Aorta (tissue), 5 donors: ENCODE measurements at regions of chr2 and their contacts with region 1.

Region 1: GRCh38 chr2:144553379-144553778 is 33.5 kb upstream of the ZEB2 start:
- DNase-seq: no peak
- ATAC-seq: no peak
- H3K4me3 ChIP-seq: no peak overlapping the region
- H3K27ac ChIP-seq: no peak overlapping the region
- H3K4me1 ChIP-seq: no peaks in the 10 kb centered on the region
- H3K27me3 ChIP-seq: no peaks in the 10 kb centered on the region

Region 2: GRCh38 chr2:144402251-144402650 is 151.1 kb before region 1 on chr2:
- intact Hi-C with region 1: no loop called
- DNase-seq: no peak
- ATAC-seq: peak; percentile 36
- H3K4me3 ChIP-seq: no peak overlapping the region
- H3K27ac ChIP-seq: no peak overlapping the region
- H3K4me1 ChIP-seq: no peaks in the 10 kb centered on the region
- H3K27me3 ChIP-seq: no peaks in the 10 kb centered on the region

Region 3: DNA sequence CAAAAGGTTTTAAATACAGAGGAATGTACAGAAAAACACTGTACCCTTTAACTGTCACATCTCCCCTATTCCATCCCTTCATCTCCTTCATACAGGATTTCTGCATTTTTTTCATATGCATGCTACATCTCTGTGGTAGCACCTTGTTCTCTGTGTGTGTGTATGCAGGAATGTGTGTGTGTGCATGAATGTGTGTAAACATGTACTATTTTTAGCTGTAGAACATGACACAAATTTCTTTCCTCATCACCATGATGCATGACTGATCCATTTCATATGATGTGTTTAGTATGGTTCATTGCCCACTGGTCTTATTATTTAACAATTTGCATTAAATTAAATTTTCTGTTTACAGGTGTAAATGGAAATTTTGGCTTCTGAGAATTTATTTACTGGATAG is 12.0 kb before region 1 on chr2:
- intact Hi-C with region 1: loop called in 1 of 2 experiments (anchors 1 kb)
- DNase-seq: no peak
- ATAC-seq: no peak
- H3K4me3 ChIP-seq: no peak overlapping the region
- H3K27ac ChIP-seq: no peak overlapping the region
- H3K4me1 ChIP-seq: no peaks in the 10 kb centered on the region
- H3K27me3 ChIP-seq: no peaks in the 10 kb centered on the region